ENCODE measurements at regions of chr6 and their contacts with region 1.

Region 1: DNA sequence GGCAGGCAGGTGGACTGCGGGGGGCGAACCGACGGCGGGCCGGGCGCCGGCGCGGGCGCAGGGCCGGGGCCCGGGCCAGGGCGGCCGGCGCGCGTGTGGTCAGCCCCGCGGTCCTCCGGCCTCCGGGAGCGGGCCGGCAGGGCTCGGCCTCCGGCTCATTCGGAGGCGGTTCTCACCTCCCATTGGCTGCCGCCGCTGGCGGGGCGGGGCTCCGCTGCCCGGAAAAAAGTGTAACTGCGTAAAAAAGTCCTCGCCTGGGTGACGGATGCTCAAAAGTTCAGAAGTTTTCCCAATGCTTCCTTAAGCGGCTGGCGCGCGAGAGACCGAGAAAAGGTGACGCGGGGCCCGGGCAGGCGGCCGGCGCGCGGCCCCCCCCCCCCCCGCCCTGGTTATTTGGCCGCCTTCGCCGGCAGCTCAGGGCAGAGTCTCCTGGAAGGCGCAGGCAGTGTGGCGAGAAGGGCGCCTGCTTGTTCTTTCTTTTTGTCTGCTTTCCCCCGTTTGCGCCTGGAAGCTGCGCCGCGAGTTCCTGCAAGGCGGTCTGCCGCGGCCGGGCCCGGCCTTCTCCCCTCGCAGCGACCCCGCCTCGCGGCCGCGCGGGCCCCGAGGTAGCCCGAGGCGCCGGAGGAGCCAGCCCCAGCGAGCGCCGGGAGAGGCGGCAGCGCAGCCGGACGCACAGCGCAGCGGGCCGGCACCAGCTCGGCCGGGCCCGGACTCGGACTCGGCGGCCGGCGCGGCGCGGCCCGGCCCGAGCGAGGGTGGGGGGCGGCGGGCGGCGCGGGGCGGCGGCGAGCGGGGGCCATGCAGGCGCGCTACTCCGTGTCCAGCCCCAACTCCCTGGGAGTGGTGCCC is at the start of gene FOXC1:
- DNase-seq: peak; percentile 93
- H3K4me3 ChIP-seq: peak within 1 kb of the TSS; percentile 66 to 87 (median 77)
- H3K27ac ChIP-seq: peak within 1 kb of the TSS; percentile 75
- H3K4me1 ChIP-seq: peaks cover 10% of the 10 kb centered on the region
- H3K27me3 ChIP-seq: no peaks in the 10 kb centered on the region
- CTCF ChIP-seq: no peak
- total RNA-seq, gene FOXC1: 12.1 to 15.8 TPM

Region 2: GRCh38 chr6:1624851-1625781 is 15.2 kb after region 1 on chr6:
- CTCF ChIA-PET with region 1: no interaction called
- dilution Hi-C with region 1: no loop called
- in situ Hi-C with region 1: no loop called
- intact Hi-C with region 1: no loop called
- DNase-seq: peak; percentile 61
- H3K4me3 ChIP-seq: peak overlapping the region; percentile 54 to 74 (median 70)
- H3K27ac ChIP-seq: peak overlapping the region; percentile 35
- H3K4me1 ChIP-seq: peaks cover 11% of the 10 kb centered on the region
- H3K27me3 ChIP-seq: no peaks in the 10 kb centered on the region
- CTCF ChIP-seq: no peak

Region 3: DNA sequence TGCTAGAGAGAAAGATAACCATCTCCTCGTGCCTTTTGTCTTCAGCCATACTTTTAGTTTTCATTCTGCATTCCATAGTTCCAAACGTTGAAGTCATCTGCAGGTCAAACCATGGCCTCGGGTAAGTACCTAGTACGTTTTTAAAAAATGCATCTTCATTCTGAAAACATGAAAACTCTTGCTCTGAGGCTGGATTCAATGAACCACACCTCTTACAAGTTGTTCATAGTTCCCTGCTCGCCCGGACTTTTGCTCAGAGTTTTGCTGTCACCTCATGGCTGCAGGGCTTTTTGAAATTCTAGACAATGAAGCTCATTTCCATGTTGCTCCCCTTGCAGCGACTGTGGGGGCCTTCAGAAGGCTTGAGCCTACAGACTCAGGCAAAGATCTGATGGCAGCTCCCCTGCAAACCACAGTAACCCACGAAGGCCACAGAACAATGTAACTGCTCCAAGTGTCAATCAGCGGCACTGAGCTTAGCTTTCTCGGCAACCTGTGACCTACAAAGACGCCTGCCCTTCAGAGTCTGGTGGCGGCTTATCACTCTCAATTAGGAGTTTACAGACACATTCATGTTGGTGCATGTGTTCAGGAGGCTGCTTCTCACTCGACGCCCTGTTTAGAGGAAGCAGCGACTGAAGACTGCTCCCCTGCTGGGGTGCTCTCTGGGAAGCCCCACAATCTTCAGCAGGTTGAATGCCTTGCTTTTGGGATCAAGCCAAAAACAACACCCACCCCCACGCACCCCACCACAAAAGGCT is 61.0 kb after region 1 on chr6:
- CTCF ChIA-PET with region 1: interaction called, 3 read pairs
- dilution Hi-C with region 1: no loop called
- in situ Hi-C with region 1: no loop called
- intact Hi-C with region 1: loop called (anchors 5 kb)
- DNase-seq: peak; percentile 81
- H3K4me3 ChIP-seq: no peak overlapping the region
- H3K27ac ChIP-seq: no peak overlapping the region
- H3K4me1 ChIP-seq: peaks cover 15% of the 10 kb centered on the region
- H3K27me3 ChIP-seq: no peaks in the 10 kb centered on the region
- CTCF ChIP-seq: no peak

Region 4: GRCh38 chr6:1761477-1761877 is 151.6 kb after region 1 on chr6:
- CTCF ChIA-PET with region 1: no interaction called
- dilution Hi-C with region 1: no loop called
- in situ Hi-C with region 1: no loop called
- intact Hi-C with region 1: loop called (anchors 5 kb)
- DNase-seq: peak; percentile 62
- H3K4me3 ChIP-seq: peak overlapping the region in 2 of 3 experiments; percentile 10 to 14
- H3K27ac ChIP-seq: peak overlapping the region; percentile 94
- H3K4me1 ChIP-seq: peaks cover 30% of the 10 kb centered on the region
- H3K27me3 ChIP-seq: no peaks in the 10 kb centered on the region
- CTCF ChIP-seq: no peak

Region 5: GRCh38 chr6:2037237-2037926 is 427.5 kb after region 1 on chr6:
- CTCF ChIA-PET with region 1: no interaction called
- dilution Hi-C with region 1: no loop called
- in situ Hi-C with region 1: no loop called
- intact Hi-C with region 1: loop called (anchors 5 kb)
- DNase-seq: peak; percentile 14
- H3K4me3 ChIP-seq: no peak overlapping the region
- H3K27ac ChIP-seq: no peak overlapping the region
- H3K4me1 ChIP-seq: no peaks in the 10 kb centered on the region
- H3K27me3 ChIP-seq: no peaks in the 10 kb centered on the region
- CTCF ChIP-seq: peak in 1 of 2 donors; percentile 44

Region 6: GRCh38 chr6:2524090-2524489 is 914.2 kb after region 1 on chr6:
- CTCF ChIA-PET with region 1: no interaction called
- dilution Hi-C with region 1: no loop called
- in situ Hi-C with region 1: no loop called
- intact Hi-C with region 1: loop called (anchors 5 kb)
- DNase-seq: no peak
- H3K4me3 ChIP-seq: no peak overlapping the region
- H3K27ac ChIP-seq: peak overlapping the region; percentile 99
- H3K4me1 ChIP-seq: peaks cover 21% of the 10 kb centered on the region
- H3K27me3 ChIP-seq: no peaks in the 10 kb centered on the region
- CTCF ChIP-seq: peak; percentile 30 to 51